ENCODE measurements at regions of chr3 and their contacts with region 1.

Region 1: DNA sequence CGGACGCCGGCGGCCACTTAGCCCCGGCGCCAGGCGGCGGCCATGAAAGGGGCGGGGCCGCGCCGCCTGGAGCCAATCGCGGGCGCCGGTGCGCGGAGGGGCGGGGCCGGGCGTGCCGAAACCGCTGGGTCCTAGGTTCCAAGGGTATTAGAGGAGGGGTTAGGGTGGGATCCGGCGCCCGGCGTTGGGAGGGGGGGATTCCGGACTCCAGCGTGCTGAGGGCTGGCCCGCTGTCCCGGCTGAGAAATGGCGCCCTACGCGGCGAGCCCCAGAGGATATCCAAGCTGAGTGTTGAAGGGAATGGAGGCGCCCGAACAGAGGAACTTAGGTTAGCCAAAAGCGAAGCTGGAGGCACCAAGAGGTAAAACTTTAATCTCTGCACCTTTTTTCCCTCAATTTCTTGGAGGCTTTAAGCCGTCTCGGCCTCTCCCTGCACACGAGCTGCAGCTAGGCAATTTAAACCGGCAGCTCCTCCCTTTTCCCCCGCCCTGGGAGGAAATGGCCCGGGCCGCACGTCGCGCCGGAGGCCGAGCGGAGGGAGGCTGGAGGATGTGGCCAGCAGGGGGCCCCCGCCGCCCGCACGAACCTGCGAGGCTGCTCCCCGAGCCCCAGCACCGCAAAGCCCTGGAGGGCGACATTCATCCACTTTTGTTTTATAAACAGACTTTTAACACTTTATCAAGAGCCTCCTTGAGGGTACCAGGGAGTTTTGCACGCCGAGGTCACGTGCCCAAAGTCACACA is at the start of gene XXYLT1:
- DNase-seq: peak; percentile 82
- H3K4me3 ChIP-seq: peak within 1 kb of the TSS; percentile 67 to 82 (median 80)
- H3K27ac ChIP-seq: peak within 1 kb of the TSS; percentile 55
- H3K4me1 ChIP-seq: peaks cover 17% of the 10 kb centered on the region
- H3K27me3 ChIP-seq: no peaks in the 10 kb centered on the region
- CTCF ChIP-seq: peak; percentile 67 to 93
- total RNA-seq, gene XXYLT1: 12.3 to 15.6 TPM

Region 2: GRCh38 chr3:195001961-195002861 is 269.1 kb before region 1 on chr3:
- CTCF ChIA-PET with region 1: no interaction called
- dilution Hi-C with region 1: no loop called
- in situ Hi-C with region 1: loop called in 1 of 2 experiments (anchors 25 kb)
- intact Hi-C with region 1: no loop called
- DNase-seq: peak; percentile 52
- H3K4me3 ChIP-seq: no peak overlapping the region
- H3K27ac ChIP-seq: no peak overlapping the region
- H3K4me1 ChIP-seq: no peaks in the 10 kb centered on the region
- H3K27me3 ChIP-seq: no peaks in the 10 kb centered on the region
- CTCF ChIP-seq: peak; percentile 50 to 62

Region 3: GRCh38 chr3:195372220-195372619 is 100.9 kb after region 1 on chr3:
- CTCF ChIA-PET with region 1: interaction called, 4 read pairs
- dilution Hi-C with region 1: no loop called
- in situ Hi-C with region 1: no loop called
- intact Hi-C with region 1: loop called (anchors 5 kb)
- DNase-seq: peak; percentile 44
- H3K4me3 ChIP-seq: no peak overlapping the region
- H3K27ac ChIP-seq: no peak overlapping the region
- H3K4me1 ChIP-seq: no peaks in the 10 kb centered on the region
- H3K27me3 ChIP-seq: no peaks in the 10 kb centered on the region
- CTCF ChIP-seq: no peak

Region 4: DNA sequence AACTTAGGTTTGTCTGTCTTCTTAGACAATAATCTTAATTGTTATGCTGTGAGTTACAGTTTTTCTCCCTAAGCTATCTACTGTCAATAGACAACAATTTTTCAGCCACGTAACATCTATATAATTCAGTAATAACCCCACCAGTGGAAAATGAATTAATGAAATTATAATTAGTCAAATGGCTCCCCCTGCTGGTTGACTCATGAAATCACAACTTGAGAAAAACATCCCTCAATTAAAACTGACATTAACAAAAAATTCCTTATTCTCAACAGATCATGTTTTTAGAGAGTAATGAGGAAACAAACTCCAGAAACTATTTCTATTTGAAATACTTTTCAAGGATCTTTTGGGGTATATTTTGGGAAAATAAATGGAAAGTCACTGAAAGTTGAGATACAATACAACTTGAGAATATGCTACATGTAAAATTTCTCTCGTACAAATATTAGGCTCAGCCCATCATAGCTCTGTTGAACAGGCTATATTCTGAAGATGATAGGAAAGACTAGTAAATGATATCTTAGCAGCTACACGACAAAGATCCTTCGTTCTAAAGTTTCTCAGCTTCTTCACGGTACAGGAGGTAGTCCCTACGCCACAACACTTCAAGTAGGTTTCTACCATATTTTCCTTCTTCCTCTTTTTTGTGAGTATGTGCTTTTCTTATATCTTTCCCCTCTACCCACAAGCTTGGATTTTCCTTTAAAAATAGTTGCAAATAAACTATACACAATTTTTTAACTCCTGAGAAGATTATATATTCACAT is 251.2 kb after region 1 on chr3:
- CTCF ChIA-PET with region 1: interaction called, 5 read pairs
- dilution Hi-C with region 1: no loop called
- in situ Hi-C with region 1: loop called in 1 of 2 experiments (anchors 25 kb)
- intact Hi-C with region 1: loop called (anchors 1 kb)
- DNase-seq: no peak
- H3K4me3 ChIP-seq: no peak overlapping the region
- H3K27ac ChIP-seq: no peak overlapping the region
- H3K4me1 ChIP-seq: no peaks in the 10 kb centered on the region
- H3K27me3 ChIP-seq: no peaks in the 10 kb centered on the region
- CTCF ChIP-seq: peak; percentile 48 to 51

Region 5: DNA sequence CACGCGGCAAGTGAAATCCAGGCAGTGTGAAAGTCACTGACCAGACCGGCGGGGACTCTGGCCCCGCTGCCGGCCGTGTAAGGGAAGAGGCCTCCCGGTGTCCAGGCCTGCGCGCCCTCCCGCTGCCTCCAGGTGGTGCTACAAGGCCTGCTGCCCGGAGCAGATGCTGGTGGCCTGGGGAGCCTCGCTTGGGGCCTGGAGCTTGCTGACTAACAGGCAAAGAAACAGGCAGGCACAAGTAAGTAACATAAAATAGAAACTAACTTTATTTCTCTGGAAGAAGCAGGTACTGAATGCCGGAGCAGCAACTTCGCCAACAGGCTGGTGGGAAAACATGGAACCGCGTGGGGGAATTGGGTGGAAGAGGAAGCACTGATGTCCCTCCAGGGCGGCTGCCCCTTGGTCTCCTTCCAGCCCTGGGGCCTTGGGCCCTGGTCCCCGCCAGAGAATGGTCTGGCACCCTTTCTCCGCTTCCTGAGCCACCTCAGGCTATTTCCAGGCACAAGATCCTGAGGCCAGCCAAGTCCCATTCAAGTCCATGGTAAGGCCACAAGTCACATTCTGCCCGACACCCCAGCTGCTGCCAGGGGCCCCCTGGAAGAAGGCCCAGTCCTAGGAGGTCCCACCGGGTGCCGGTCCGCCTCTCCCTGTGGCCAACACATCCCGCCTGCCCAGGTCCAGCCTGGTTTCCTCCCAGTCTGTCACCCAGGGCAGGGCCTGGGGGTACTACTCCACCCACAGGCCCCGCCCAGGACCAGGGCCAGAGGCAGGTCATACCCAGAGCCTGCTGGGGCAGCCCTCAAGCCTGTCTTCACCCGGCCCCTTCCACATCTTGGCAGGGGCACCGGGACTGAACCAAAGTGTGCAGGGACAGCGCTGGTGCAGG is 592.1 kb after region 1 on chr3:
- CTCF ChIA-PET with region 1: no interaction called
- dilution Hi-C with region 1: no loop called
- in situ Hi-C with region 1: no loop called
- intact Hi-C with region 1: loop called (anchors 2 kb)
- DNase-seq: peak; percentile 87
- H3K4me3 ChIP-seq: no peak overlapping the region
- H3K27ac ChIP-seq: peak overlapping the region; percentile 38
- H3K4me1 ChIP-seq: peaks cover 32% of the 10 kb centered on the region
- H3K27me3 ChIP-seq: no peaks in the 10 kb centered on the region
- CTCF ChIP-seq: peak; percentile 91 to 98

Measured in mammary epithelial cell (primary cell).